Motor neuron (in vitro differentiated cells): ENCODE measurements at regions of chr11 and their contacts with region 1.

Region 1: GRCh38 chr11:1807264-1807995 is 27.4 kb upstream of the SYT8 start:
- ATAC-seq: peak in 1 of 8 experiments; percentile 24
- H3K4me3 ChIP-seq: no peak overlapping the region
- H3K27ac ChIP-seq: no peak overlapping the region
- H3K4me1 ChIP-seq: no peaks in the 10 kb centered on the region

Region 2: GRCh38 chr11:1706634-1707400 is 100.6 kb before region 1 on chr11:
- in situ Hi-C with region 1: loop called in 4 of 9 experiments (anchors 10 to 25 kb)
- ATAC-seq: no peak
- H3K4me3 ChIP-seq: no peak overlapping the region
- H3K27ac ChIP-seq: no peak overlapping the region
- H3K4me1 ChIP-seq: no peaks in the 10 kb centered on the region